ENCODE measurements at regions of chr2 and their contacts with region 1.

Region 1: DNA sequence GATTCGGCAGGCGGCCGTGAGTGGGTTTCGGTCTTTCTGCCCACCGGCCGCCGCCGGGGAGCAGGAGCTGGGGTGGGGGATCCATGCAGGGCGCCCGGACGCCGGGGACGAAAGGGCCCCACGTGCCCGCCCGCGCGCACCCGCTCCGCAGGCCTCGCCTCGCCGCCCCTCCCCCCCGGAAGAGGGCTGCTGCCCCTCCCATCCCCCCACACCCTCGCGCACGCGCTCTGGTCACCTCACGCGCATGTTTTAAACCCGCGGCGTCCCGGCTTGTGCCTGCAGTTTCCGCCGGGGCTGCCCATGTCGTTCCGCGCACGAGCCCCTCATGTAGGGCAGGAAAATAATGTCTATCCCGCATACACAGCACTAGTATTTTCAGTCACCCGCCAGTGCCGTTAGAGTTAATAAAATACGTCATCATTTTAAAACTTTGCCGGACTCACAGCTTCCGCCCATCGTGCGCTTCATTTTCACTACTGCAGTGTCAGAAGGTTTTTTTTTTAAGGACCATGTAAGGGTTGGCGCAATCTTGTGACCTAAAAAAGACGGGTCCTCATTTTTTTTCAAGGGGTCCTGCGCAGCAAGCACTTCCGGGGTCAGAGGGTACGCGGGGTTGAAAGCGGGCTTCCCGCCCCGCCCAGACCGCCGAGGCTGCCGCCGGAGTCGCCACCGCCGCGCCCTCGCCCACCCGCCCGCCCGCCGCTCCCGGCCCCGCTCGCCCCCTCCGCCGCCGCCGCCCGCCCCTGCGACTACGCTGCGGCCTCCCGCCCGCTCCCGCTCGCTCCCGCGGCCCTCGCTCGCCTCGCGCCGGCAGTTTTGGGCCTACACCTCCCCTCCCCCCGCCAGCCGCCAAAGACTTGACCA is at the start of gene PCBP1:
- DNase-seq: peak; percentile 87
- H3K4me3 ChIP-seq: peak within 1 kb of the TSS; percentile 96
- H3K27ac ChIP-seq: peak within 1 kb of the TSS; percentile 98
- H3K27me3 ChIP-seq: no peaks in the 10 kb centered on the region
- CTCF ChIP-seq: no peak

Region 2: GRCh38 chr2:69946351-69947077 is 140.6 kb before region 1 on chr2:
- in situ Hi-C with region 1: loop called (anchors 25 kb)
- DNase-seq: peak; percentile 46
- H3K4me3 ChIP-seq: no peak overlapping the region
- H3K27ac ChIP-seq: peak overlapping the region; percentile 27
- H3K27me3 ChIP-seq: no peaks in the 10 kb centered on the region
- CTCF ChIP-seq: no peak